GM13977 (cell line): ENCODE measurements at regions of chr12 and their contacts with region 1.

Region 1: GRCh38 chr12:117377744-117378143 is 16.3 kb upstream of the NOS1 start:
- DNase-seq: no peak
- CTCF ChIP-seq: no peak

Region 2: DNA sequence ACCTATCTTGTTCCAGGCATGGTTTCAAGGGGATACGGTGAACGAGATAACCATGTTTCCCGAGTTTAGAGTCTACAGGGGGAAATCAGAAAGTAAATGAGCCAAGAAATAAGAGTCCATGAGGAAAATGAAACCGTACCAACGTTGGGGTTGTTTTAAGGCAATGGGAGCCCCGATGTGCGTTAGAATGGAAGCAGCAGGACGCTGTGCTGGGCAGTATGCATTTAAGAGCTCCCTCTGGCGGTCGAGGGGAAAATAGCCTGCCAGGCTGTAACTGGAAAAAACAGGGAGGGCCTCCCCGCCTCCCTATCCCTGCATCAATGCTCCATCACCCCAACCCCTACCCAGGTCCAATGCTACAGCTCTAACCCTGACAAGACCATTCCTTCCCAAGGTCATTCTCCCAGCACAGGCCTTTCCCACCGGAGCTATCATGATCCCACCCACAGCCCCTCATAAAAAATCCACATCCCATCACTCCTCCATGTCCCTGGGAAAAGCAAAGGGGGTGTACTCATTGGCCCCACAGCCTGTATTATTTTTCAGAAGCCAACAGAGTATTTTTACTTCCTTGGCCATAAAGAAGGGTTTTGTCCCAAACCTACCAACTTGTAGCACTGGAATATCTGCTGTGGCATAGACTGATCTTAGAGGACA is 210.0 kb after region 1 on chr12:
- in situ Hi-C with region 1: loop called (anchors 25 kb)
- DNase-seq: peak; percentile 65
- CTCF ChIP-seq: peak; percentile 89

Region 3: GRCh38 chr12:117803001-117803400 is 425.3 kb after region 1 on chr12:
- in situ Hi-C with region 1: loop called (anchors 25 kb)
- DNase-seq: no peak
- CTCF ChIP-seq: no peak